ENCODE measurements at regions of chrX and their contacts with region 1.

Region 1: DNA sequence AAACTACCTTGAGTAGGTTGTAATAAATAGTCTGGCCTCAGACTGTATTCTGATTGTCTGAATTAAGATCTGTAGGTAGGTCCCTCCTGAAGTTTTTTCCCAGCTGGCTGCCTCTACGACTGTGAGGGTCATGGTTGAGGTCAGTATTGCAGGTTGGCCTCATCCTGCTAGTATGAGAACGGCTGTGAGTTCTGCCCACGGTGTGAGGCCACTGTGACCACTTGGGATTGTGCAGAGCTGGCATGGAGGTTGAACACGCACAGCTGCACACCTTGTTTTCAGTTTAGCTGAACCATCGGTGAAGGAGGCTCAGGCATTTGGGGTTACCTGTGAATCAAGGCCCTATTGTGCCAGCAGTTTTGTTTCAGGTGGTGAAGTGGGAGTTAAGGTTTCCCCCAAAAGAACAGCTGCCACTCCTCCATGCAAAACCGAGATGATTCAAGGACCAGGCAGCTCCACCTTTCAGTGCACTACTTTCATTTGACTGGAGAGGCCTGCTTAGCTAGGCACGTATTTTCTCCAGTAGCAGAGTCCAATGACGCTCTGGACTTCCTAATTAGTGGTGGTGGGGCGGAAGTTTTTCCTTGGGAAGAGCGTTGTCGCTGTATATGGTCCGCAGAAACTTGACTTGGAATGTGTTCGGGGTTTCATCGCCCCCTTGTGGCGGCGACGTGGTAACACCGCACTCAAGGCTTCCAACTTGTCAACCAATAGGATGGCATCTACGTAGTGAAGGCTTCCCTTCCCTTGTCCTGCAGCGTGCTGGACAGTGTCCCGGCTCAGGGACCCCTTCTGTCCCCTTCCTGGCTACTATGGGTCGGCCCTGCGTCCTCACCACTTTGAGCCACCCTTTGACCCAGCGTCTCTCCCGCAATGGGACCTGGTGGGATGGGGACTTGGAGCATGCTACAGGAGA is 13.8 kb downstream of the CMC4 start:
- DNase-seq: peak; percentile 26
- H3K4me3 ChIP-seq: peak overlapping the region; percentile 25; the same call in 1 of the 2 replicates
- H3K27ac ChIP-seq: no peak overlapping the region
- H3K27me3 ChIP-seq: no peaks in the 10 kb centered on the region
- CTCF ChIP-seq: peak; percentile 67

Region 2: GRCh38 chrX:154918060-154918483 is 139.1 kb before region 1 on chrX:
- CTCF ChIA-PET with region 1: interaction called, 19 read pairs
- POLR2A ChIA-PET with region 1: no interaction called
- DNase-seq: peak; percentile 71
- H3K4me3 ChIP-seq: peak overlapping the region; percentile 7; the same call in 1 of the 2 replicates
- H3K27ac ChIP-seq: no peak overlapping the region
- H3K27me3 ChIP-seq: no peaks in the 10 kb centered on the region
- CTCF ChIP-seq: peak; percentile 69